ENCODE measurements at regions of chr16 and their contacts with region 1.

Region 1: DNA sequence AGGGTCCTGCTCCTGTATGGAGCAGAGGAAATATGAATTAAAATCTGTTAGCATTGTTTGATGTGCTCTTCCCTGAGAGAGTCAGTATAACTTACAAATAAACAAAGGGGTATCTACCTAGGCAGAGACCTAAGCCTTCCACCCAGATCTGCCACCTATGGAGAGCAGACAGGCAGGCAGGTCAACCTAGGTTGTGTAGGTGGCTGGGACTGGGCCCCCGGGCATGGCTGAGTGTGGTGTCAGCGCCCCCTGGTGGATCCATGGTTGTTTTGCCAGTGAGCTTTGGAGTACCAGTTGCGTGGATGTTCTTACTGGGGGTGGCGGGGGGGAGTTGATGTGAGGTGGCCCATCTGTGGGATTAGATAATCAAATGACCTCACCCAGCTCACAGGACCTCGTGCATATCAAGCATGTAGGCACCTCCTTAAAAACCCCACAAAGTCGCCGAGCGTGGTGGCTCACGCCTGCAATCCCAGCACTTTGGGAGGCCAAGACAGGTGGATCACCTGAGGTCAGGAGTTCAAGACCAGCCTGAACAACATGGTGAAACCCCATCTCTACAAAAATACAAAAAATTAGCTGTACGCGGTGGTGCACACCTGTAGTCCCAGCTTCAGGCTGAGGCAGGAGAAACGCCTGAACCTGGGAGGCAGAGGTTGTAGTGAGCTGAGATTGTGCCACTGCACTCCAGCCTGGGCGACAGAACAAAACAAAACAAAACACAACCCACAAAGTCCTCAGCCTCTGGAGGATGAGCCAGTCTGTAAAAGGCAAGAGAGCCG is 17.6 kb downstream of the DUS2 start:
- DNase-seq: peak; percentile 93
- ATAC-seq: peak; percentile 91

Region 2: GRCh38 chr16:67672739-67673662 is 367.7 kb before region 1 on chr16:
- intact Hi-C with region 1: loop called (anchors 2 kb)
- DNase-seq: no peak
- ATAC-seq: peak; percentile 28

Region 3: DNA sequence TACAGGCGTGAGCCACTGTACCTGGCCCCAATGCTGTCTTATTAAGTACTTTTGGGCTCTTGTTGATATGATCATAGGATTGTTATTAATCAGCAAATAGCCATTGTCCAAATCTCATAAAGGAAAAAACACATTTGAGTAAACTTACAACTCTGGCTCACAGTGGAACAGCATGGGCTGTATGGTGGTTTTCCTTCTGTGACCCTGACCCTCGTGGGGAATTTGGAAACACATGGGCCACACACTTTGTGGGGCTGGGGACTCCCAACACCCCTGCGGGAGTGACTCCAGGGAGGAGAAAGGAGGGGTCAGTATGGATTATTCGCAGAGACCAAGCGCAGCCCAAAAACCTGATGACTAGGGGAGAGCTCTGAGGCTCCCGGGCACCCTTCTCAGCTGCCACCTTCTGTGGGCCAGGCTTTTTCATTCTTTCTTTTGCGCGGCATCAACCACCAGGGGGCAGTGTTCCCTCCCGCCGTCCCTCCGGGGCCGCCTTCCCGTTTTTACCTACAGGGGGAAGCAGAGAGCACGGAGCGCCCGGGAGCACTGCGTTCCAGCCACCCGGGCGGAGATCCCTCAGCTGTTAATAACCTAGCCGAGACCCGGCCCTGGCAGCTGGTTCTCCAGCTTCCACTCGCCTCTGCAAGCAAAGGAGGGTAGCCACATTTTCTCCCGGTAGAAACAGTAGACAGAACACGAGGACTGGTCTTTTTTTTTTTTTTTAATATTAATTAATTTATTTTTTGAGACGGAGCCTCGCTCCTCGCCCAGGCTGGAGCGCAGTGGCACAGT is 224.3 kb before region 1 on chr16:
- intact Hi-C with region 1: loop called (anchors 1 kb)
- DNase-seq: peak; percentile 95
- ATAC-seq: peak; percentile 93

Region 4: GRCh38 chr16:67883872-67884261 is 156.8 kb before region 1 on chr16:
- intact Hi-C with region 1: loop called (anchors 2 kb)
- DNase-seq: peak; percentile 76
- ATAC-seq: no peak

Region 5: GRCh38 chr16:67993189-67994039 is 47.3 kb before region 1 on chr16:
- intact Hi-C with region 1: loop called (anchors 2 kb)
- DNase-seq: peak; percentile 95
- ATAC-seq: peak; percentile 95

Region 6: DNA sequence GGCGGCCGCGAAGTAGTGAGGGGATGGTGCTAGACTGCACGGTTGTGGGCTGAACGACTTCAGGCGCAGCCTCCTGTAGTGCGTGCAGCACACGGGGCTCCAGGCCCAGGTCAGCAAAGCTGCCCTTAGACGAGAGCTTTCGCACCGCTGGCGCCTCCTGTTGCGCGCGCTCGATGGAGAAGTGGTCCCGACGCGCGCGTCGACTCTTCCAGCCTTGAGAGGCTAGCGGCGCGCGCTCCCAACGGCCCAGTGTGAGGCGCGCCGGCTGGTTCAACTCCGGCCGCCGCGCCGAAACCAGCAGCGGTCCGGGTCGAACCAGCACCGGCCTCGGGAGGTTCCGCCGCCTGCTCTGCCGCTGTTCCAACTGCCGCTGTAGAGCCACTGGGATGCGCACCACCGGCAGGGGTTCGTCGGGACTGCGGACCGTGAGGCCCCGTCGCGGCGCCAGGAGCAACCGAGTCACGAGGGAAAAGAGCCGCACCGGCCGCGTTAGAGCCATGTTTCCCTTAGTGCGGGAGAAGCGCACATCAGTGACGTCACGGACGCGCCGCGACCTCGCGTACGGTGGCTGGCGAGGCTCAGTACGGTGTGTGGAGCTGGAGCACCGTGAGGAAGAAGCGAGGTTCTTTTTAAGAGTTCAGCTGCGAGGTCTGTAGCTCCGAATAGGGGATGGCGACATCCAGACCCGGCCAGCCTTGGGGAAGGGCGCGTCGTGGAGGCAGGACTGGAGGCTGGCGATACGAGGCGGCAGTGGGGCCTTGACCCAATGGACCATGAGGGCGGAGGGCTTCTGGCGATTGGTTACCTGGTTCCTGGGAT is 17.8 kb before region 1 on chr16 and contains the starts of genes DDX28 and DUS2:
- intact Hi-C with region 1: loop called (anchors 1 kb)
- DNase-seq: peak; percentile 98
- ATAC-seq: peak; percentile 98
- total RNA-seq, gene DDX28: 7.5 TPM
- total RNA-seq, gene DUS2: 7.0 TPM

Region 7: GRCh38 chr16:68074850-68075555 is 34.3 kb after region 1 on chr16:
- intact Hi-C with region 1: no loop called
- DNase-seq: no peak
- ATAC-seq: no peak

Region 8: GRCh38 chr16:68470461-68471150 is 429.9 kb after region 1 on chr16:
- intact Hi-C with region 1: no loop called
- DNase-seq: no peak
- ATAC-seq: peak; percentile 83